A549 (cell line): ENCODE measurements at regions of chr12 and their contacts with region 1.

Region 1: DNA sequence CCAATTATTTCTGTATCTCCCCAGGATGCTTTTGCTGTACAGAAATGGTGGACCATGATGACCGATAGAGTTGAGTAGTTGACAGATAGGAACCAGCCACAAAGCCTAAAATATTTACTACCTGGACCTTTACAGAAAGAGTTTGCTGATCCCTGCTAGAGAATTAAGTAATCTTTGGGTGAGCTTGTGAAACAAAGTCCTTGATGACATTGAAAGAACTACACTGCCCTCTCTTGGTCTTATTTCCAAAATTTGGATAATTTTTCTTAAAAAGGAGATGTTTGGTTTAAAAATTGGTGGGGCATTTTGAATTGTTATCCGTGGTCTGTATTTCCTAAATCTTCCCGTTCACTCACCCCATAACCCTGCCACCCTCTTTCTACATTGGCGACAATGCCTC is 13.7 kb upstream of the TCTN1 start:
- DNase-seq: peak; percentile 56 to 77
- ATAC-seq: peak in 1 of 2 experiments; percentile 28; a peak in 2 of 6 replicates
- H3K4me3 ChIP-seq: no peak overlapping the region
- H3K27ac ChIP-seq: no peak overlapping the region
- H3K4me1 ChIP-seq: no peaks in the 10 kb centered on the region
- CTCF ChIP-seq: peak; percentile 86
- EP300 ChIP-seq: no peak
- POLR2A ChIP-seq: no peak
- RAD21 ChIP-seq: peak; percentile 91 to 95

Region 2: DNA sequence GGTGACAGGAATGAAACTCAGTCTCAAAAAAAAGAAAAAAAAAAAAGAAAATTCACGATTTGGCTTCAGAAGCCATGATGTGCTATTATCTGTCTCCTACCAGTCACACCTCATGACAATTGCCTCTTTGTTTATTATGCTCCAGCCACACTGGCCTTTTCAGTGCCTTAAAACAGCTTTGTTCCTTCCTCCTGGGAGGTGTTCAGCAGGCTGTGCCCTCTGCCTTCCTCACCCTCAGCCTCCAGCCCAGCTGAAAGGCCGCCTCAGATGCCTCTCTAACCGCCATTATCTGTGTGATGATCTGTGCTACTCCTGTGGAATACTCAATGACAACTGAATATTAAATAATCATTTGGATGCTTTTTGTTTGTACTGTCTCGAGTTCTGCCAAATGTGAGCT is 141.5 kb before region 1 on chr12:
- CTCF ChIA-PET with region 1: interaction called, 168 read pairs
- POLR2A ChIA-PET with region 1: no interaction called
- DNase-seq: no peak
- ATAC-seq: no peak
- H3K4me3 ChIP-seq: no peak overlapping the region
- H3K27ac ChIP-seq: no peak overlapping the region
- H3K4me1 ChIP-seq: no peaks in the 10 kb centered on the region
- CTCF ChIP-seq: no peak
- EP300 ChIP-seq: no peak
- POLR2A ChIP-seq: no peak
- RAD21 ChIP-seq: no peak

Region 3: DNA sequence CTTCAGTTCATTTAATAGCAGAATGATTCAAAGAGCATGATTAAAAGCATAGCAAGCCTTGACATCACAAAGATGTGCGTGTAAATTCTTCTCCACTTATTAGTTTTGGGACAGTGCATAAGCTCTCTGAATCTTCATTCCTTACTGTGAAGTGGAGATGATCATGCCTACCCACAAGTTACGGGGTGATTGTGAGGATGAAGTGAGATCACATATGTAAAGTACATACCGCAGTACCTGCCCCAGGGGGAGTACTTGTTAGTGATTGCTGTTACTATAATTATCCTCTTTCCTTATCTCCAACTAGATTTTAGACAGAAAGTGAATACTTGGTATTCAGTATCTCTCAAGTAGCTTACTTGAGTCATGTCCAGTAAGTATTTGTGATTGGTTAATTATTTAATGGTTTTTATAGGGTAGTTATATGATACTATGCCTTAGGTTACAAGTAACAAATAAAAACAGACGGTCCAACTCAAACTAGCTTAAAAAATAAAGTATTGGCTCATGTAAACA is 92.1 kb before region 1 on chr12:
- CTCF ChIA-PET with region 1: interaction called, 184 read pairs
- POLR2A ChIA-PET with region 1: no interaction called
- DNase-seq: no peak
- ATAC-seq: no peak
- H3K4me3 ChIP-seq: no peak overlapping the region
- H3K27ac ChIP-seq: no peak overlapping the region
- H3K4me1 ChIP-seq: no peaks in the 10 kb centered on the region
- CTCF ChIP-seq: no peak
- EP300 ChIP-seq: no peak
- POLR2A ChIP-seq: no peak
- RAD21 ChIP-seq: no peak

Region 4: DNA sequence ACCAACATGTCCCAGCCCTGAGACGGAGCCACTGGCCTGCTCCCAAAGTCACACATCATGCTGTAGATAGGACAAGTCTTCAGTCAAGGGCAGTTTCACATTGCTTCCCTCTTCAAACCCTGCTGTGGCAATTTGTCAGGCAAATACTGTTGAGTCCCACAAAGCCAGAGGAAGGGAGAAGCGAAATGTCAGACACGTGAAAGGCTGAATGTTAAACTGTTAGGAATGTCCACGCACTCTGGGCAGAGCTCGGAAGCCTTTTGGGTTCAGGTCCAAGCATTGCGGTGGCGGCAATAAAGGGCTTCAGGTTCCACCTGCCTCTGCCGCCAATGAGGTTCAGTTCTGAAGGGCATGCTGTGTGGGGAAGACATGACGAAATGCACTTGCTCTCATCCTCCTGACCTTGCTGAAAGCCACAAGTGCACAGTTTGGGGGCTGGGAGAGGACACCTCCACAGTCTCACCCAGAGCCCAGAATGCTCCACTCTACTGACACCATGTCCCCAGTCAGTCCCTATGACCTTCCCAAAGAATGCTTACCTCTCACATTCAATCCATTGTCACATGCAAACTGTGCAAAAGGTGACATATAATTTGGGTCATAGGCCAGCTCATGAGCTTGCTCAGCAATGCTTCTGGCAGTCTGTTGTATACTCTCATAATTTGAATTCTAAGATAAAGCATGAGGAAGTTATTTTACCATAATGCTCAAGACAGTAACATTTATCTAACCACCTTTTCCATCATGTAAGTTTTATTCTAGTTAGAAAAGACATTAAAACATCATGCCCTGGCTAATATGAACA is 62.4 kb before region 1 on chr12:
- CTCF ChIA-PET with region 1: interaction called, 30 read pairs
- POLR2A ChIA-PET with region 1: no interaction called
- DNase-seq: no peak
- ATAC-seq: no peak
- H3K4me3 ChIP-seq: no peak overlapping the region
- H3K27ac ChIP-seq: no peak overlapping the region
- H3K4me1 ChIP-seq: peaks cover 10% of the 10 kb centered on the region
- CTCF ChIP-seq: no peak
- EP300 ChIP-seq: no peak
- POLR2A ChIP-seq: no peak
- RAD21 ChIP-seq: no peak

Region 5: DNA sequence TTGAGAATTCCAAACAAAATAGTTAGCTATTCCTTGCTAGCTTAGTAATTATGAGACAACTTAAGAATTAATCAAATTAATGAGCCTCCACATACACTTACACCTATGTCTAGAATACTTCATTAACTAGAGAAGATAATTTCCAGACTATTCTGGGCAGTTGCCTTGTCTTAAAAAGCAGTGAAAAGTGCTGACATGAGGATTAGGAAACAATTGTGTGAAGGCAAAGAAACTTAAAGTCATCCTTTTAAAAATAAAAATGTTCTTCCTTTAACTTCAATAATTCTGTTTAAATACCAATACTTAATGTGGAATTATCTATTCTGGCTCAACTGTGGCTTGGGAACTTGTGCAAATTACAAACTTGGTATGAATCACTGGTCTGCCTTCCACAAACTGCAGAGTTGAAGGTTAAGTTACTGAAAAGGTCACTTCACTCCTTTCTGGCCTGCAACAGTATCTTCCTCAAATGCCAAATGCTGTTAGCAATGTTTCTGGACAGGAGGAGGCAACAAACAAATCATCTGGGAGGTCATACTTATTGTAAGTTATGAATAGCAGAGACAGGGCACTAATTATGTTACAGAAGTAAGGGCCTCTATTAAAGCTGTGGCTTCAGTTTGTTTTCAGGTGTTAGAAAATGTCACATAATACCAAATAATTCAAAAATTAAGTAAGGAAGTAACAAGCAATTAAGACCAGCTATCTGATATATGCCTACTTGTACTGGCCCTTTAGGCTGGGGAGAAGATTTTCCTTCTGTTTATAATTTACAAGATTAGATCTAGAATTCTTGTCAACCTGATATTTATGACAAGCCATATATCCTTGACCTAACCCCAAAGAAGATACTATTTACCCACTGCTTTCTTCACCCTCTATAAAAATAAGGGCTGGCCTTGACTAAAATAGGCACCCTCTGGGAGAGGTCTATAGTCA is 36.3 kb before region 1 on chr12:
- CTCF ChIA-PET with region 1: interaction called, 20 read pairs
- POLR2A ChIA-PET with region 1: no interaction called
- DNase-seq: no peak
- ATAC-seq: 0 out of 6 replicates have a peak, but pooled peaks of 1 of the 2 experiments have one; percentile 8
- H3K4me3 ChIP-seq: no peak overlapping the region; the same call in 2 of the 3 replicates
- H3K27ac ChIP-seq: peak overlapping the region; percentile 28 to 51; a peak in 3 of 6 replicates
- H3K4me1 ChIP-seq: peaks cover 61% of the 10 kb centered on the region
- CTCF ChIP-seq: no peak
- EP300 ChIP-seq: no peak
- POLR2A ChIP-seq: no peak
- RAD21 ChIP-seq: no peak

Region 6: DNA sequence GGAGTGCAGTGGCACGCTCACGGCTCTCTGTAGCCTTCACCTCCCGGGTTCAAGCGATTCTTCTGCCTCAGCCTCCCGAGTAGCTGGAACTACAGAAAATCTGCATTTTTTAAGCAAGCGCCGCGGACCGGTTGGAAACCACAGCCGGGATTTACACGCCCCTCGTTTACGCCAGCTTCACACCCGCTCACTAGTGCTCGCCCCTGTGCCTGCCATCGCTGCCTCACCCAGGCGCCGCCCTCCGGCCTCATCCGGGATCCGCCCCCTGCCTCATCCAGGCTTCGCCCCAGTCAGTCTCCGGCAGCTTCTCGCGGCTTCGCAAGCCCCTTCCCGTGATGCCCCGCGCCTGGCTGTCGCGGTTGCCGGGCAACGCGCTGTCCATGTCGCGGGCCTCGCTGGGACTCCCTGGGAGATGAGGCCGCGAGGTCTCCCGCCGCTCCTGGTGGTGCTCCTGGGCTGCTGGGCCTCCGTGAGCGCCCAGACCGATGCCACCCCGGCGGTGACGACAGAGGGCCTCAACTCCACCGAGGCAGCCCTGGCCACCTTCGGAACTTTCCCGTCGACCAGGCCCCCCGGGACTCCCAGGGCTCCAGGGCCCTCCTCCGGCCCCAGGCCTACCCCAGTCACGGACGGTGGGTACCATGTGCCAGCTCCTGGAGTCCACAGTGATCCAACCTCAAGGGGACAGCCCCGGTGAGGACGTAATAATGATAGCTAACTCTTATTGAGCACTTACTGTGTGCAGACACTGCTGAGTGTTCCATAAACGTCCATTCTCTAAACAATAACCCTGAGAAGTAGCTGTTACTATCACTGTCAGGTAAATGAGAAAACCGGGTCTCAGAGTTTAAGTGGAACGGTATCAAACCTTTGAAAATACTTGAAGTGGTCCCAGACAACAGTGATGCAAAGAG is 13.8 kb after region 1 on chr12 and contains the start of gene TCTN1:
- CTCF ChIA-PET with region 1: interaction called, 56 read pairs
- POLR2A ChIA-PET with region 1: no interaction called
- DNase-seq: peak; percentile 95 to 98
- ATAC-seq: peak; percentile 99 to 100
- H3K4me3 ChIP-seq: peak within 1 kb of the TSS; percentile 78
- H3K27ac ChIP-seq: peak within 1 kb of the TSS; percentile 82 to 86
- H3K4me1 ChIP-seq: peaks cover 8% of the 10 kb centered on the region; the same call in 1 of the 3 replicates
- CTCF ChIP-seq: no peak
- EP300 ChIP-seq: no peak
- POLR2A ChIP-seq: peak; percentile 86
- RAD21 ChIP-seq: no peak; a peak in 1 of 5 replicates
- polyA plus RNA-seq, gene TCTN1: 56.9 and 62.2 TPM in 2 replicates

Region 7: DNA sequence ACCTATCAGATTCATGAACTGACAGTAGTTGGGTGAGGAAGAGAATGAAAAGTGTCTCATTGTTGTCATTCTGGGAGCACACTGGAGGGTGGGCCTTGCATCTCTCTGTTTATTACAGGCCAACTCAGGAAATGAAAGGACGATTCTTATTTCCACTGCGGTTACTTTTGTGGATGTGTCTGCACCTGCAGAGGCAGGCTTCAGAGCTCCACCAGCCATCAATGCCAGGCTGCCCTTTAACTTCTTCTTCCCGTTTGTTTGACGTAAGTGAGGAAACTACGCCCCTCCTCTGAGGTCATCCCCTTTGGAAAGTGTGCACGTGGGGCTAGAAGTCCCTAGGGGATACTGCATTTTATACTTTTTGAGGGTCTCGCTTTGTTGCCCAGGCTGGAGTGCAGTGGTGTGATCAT is 47.4 kb after region 1 on chr12:
- CTCF ChIA-PET with region 1: no interaction called
- POLR2A ChIA-PET with region 1: no interaction called
- DNase-seq: no peak
- ATAC-seq: no peak
- H3K4me3 ChIP-seq: no peak overlapping the region
- H3K27ac ChIP-seq: no peak overlapping the region
- H3K4me1 ChIP-seq: no peaks in the 10 kb centered on the region
- CTCF ChIP-seq: no peak
- EP300 ChIP-seq: no peak
- POLR2A ChIP-seq: no peak
- RAD21 ChIP-seq: no peak